Esophagus muscularis mucosa (tissue), 4 donors: ENCODE measurements at regions of chr3 and their contacts with region 1.

Region 1: DNA sequence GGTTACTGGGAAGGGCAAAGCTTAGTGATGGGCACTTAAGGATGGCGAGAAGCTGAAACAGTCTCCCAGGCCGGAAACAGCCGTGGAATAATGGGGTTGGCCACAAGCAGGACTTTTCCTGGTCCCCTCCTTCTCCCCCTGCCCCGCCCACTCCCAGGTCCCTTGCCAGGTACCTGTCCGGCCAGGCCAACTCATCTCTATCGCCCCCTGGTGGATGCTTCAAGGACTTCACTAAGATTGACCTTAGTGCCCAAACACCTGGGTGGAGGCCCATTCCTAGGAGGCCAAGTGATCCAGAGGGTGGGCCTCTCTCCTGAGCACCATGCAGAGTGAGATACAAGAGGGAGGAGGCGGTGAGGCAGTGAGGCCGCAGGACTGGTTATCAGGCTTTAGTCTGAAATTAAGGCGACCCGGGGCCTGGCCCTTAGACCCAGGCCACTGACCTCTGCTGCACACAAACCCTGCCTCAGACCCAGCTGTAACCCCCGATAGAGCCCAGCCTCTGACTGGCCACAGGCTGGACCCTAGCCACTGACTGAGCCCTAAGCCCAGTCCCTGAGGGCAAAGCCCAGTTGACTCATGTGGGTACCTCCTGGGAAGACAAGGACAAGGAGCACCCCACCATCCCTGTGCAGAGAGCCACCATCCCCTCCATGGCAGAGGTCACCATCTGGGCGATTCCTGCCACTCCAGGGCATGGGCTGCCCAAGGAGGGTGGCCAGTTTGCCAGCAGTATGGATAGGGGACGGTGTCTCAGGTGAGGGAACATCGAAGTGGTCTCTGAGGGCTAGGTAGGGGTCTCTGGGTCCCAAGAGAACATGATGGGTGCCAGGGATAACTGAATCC is 37.6 kb downstream of the VIPR1 start:
- DNase-seq: no peak
- H3K4me3 ChIP-seq: no peak overlapping the region
- H3K27ac ChIP-seq: no peak overlapping the region
- H3K4me1 ChIP-seq: peaks cover 10 to 15% (median 11%) of the 10 kb centered on the region in 4 donors
- H3K27me3 ChIP-seq: peaks cover 0 to 4% (median 0%) of the 10 kb centered on the region in 4 donors
- CTCF ChIP-seq: peak; percentile 42 to 72 (median 52)
- EP300 ChIP-seq: no peak
- POLR2A ChIP-seq: no peak

Region 2: GRCh38 chr3:42473083-42473932 is 66.8 kb before region 1 on chr3:
- intact Hi-C with region 1: no loop called
- DNase-seq: peak; percentile 86
- H3K4me3 ChIP-seq: no peak overlapping the region
- H3K27ac ChIP-seq: no peak overlapping the region
- H3K4me1 ChIP-seq: no peaks in the 10 kb centered on the region
- H3K27me3 ChIP-seq: peaks cover 0 to 9% (median 0%) of the 10 kb centered on the region in 4 donors
- CTCF ChIP-seq: no peak
- EP300 ChIP-seq: no peak
- POLR2A ChIP-seq: no peak

Region 3: DNA sequence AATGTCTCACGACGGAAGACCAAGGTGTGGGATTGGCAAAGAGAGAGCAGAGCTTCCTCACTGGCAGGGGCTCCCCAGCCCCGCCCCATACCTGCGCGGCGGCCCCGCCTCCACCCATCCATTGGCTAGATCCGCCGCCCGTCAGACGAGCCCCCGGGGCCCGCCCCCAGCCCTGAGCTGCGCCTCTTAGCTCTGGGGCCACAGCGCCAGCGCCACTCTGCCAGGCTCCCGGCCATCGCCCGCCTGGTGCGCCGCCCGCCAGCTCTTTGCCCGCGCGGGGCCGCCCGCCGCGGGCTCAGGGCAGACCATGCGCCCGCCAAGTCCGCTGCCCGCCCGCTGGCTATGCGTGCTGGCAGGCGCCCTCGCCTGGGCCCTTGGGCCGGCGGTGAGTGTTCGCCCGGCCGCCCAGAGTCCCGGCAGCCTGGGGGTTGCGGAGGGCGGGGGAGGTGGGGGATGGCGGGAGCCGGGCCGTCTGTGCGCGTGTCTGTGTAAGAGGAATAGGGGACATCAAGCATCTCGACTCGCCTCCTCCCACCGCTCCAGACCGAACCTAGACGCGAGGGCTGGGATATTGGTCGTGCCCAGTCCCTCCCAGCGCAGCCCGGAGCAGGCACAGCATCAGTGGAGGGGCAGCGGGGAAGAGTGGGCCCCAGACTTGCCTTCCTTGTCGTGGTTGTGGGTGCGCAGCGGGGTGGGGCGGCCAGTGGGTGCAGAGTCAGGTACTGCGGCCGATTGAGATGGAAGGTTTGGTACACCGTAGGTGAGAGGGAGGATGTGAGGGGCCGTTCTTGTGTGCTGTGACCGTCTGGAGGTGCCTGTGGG is 37.5 kb before region 1 on chr3 and contains the start of gene VIPR1:
- intact Hi-C with region 1: loop called (anchors 5 kb)
- DNase-seq: no peak
- H3K4me3 ChIP-seq: peak within 1 kb of the TSS; percentile 54 to 62 (median 58)
- H3K27ac ChIP-seq: peak within 1 kb of the TSS in 2 of 4 donors; percentile 16 to 19
- H3K4me1 ChIP-seq: peaks cover 10 to 24% (median 22%) of the 10 kb centered on the region in 4 donors
- H3K27me3 ChIP-seq: peaks cover 0 to 57% (median 19%) of the 10 kb centered on the region in 4 donors
- CTCF ChIP-seq: no peak
- EP300 ChIP-seq: no peak
- POLR2A ChIP-seq: no peak
- total RNA-seq, gene VIPR1: 3.0 to 6.6 (median 4.6) TPM